Endothelial cell of umbilical vein (primary cell): ENCODE measurements at regions of chr17 and their contacts with region 1.

Region 1: GRCh38 chr17:76623271-76624146 is 20.0 kb downstream of the ST6GALNAC1 start:
- DNase-seq: peak; percentile 79
- H3K4me3 ChIP-seq: peak overlapping the region in 2 of 3 experiments; percentile 10 to 20
- H3K27ac ChIP-seq: peak overlapping the region; percentile 79
- H3K4me1 ChIP-seq: peaks cover 10% of the 10 kb centered on the region
- H3K27me3 ChIP-seq: peaks cover 0 to 2% of the 10 kb centered on the region in 2 experiments
- CTCF ChIP-seq: peak; percentile 96 to 97
- POLR2A ChIP-seq: no peak

Region 2: GRCh38 chr17:76523084-76524037 is 100.1 kb before region 1 on chr17:
- CTCF ChIA-PET with region 1: interaction called, 112 read pairs
- POLR2A ChIA-PET with region 1: no interaction called
- dilution Hi-C with region 1: no loop called
- intact Hi-C with region 1: loop called (anchors 1 kb)
- DNase-seq: peak; percentile 60
- H3K4me3 ChIP-seq: no peak overlapping the region
- H3K27ac ChIP-seq: no peak overlapping the region
- H3K4me1 ChIP-seq: peaks cover 10% of the 10 kb centered on the region
- H3K27me3 ChIP-seq: no peaks in the 10 kb centered on the region
- CTCF ChIP-seq: peak; percentile 99 to 100
- POLR2A ChIP-seq: no peak

Region 3: GRCh38 chr17:76557368-76558197 is 65.9 kb before region 1 on chr17:
- CTCF ChIA-PET with region 1: interaction called, 121 read pairs
- POLR2A ChIA-PET with region 1: no interaction called
- dilution Hi-C with region 1: no loop called
- intact Hi-C with region 1: loop called (anchors 1 kb)
- DNase-seq: peak; percentile 98
- H3K4me3 ChIP-seq: peak overlapping the region; percentile 66 to 94 (median 78)
- H3K27ac ChIP-seq: peak overlapping the region; percentile 68
- H3K4me1 ChIP-seq: peaks cover 40% of the 10 kb centered on the region
- H3K27me3 ChIP-seq: no peaks in the 10 kb centered on the region
- CTCF ChIP-seq: peak; percentile 80 to 88
- POLR2A ChIP-seq: peak; percentile 97

Region 4: DNA sequence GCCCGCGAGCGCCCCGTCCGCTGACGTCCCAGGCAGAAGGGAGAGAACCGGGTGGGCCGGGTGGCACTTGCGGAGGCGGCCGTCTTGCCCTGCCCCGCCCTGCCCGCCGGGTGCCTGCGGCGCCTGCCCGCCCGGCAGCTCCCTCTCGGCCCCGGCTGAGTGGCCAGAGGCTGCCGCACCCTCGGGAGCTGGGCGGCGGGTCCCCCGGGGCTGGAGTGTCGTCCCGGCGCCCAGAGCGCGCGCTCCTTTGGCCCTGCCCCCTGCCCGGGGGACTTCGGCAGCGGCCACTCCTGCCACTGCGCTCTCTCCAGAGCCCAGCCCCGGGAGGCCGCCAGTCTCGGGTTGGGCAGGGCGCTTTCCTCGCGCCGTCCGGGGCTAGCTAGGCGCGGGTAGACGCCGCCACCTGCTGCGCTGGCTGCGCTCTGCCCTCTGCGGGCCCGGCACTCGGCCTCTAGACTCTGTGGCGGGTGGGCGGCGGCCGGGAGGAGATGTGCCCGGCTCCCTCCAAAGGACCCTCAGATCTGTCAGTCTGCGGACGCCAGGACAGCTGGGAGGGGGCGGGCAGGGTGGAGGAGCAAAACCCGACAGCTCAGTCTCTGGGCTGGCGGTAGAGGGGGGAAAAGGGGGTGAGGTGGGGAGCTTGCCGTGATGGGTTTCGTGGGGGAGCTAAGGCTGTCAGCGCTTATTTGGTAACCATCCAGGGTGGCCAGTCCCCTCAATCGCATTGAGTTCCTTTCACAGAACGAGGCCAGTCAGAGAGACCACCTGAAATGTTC is 37.5 kb before region 1 on chr17 and contains the start of gene ST6GALNAC2:
- CTCF ChIA-PET with region 1: interaction called, 32 read pairs
- POLR2A ChIA-PET with region 1: no interaction called
- dilution Hi-C with region 1: no loop called
- intact Hi-C with region 1: loop called (anchors 5 kb)
- DNase-seq: peak; percentile 50
- H3K4me3 ChIP-seq: peak within 1 kb of the TSS; percentile 17 to 37 (median 35)
- H3K27ac ChIP-seq: no peak within 1 kb of the TSS
- H3K4me1 ChIP-seq: peaks cover 5% of the 10 kb centered on the region
- H3K27me3 ChIP-seq: peaks cover 16 to 18% of the 10 kb centered on the region in 2 experiments
- CTCF ChIP-seq: peak; percentile 21 to 55
- POLR2A ChIP-seq: no peak
- total RNA-seq, gene ST6GALNAC2: 0.69 and 1.7 TPM in 2 replicates

Region 5: DNA sequence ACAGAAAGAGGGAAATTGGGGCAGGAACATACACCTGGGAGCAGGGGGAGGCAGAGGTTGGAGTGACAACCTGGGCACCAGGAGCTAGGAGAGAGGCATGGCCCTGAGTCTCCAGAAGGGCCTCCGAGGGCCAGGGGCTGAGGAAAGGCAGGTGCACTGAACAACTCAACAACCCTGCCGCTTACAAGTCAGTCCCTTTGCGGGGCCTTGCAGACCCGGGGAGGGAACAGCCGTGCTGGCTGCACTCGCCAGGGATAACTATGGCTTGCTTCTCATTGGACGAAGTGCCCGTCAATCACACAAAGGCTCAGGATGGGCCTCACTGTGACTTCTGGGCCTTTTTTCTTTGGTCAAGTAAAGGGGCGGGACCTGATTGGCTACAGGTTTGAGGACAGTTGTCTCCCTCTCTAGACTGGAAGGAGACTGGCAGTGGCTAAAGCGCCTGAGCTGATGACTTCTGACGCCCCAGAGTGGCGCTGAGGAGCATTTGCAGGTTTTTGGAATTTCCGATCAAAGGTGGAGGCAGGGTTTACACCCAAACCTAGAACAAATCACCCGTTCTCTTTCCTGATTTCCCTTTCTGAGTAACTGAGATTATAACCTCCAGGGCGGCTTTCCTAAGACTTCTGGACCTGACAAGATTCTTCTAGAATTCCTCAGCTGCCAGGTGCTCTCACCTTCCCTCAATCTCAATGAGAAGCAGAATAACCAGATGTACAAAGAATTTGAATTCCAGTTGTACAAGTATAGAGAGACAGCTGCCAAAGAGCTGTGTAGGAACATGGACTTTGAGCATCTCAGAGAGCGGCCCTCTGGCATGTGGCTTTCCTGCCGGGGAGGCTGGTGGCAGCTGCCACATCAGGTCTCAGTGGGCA is 10.3 kb before region 1 on chr17:
- CTCF ChIA-PET with region 1: interaction called, 11 read pairs
- POLR2A ChIA-PET with region 1: no interaction called
- dilution Hi-C with region 1: no loop called
- intact Hi-C with region 1: no loop called
- DNase-seq: no peak
- H3K4me3 ChIP-seq: no peak overlapping the region
- H3K27ac ChIP-seq: no peak overlapping the region
- H3K4me1 ChIP-seq: no peaks in the 10 kb centered on the region
- H3K27me3 ChIP-seq: no peaks in the 10 kb centered on the region
- CTCF ChIP-seq: no peak
- POLR2A ChIP-seq: no peak

Region 6: DNA sequence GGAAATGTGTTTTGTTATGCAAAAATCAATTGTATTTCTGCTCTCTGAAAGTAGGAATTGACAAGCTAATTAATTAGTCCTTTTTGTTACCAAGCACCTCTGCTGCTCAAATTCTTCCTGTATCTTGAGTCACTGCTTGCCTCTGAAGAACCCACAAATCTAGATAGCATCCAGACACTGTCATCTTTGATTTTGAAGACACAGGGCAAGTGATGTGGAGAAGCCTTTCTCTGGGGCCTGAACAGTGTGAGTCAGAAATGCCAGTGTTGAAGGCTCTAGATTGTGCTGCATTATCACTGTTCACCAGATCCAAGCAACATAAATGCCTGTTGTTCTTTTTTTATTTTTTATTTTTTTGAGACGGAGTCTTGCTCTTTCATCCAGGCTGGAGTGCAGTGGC is 30.9 kb after region 1 on chr17:
- CTCF ChIA-PET with region 1: interaction called, 10 read pairs
- POLR2A ChIA-PET with region 1: no interaction called
- dilution Hi-C with region 1: no loop called
- intact Hi-C with region 1: no loop called
- DNase-seq: no peak
- H3K4me3 ChIP-seq: no peak overlapping the region
- H3K27ac ChIP-seq: no peak overlapping the region
- H3K4me1 ChIP-seq: no peaks in the 10 kb centered on the region
- H3K27me3 ChIP-seq: peaks cover 0 to 2% of the 10 kb centered on the region in 2 experiments
- CTCF ChIP-seq: no peak
- POLR2A ChIP-seq: no peak

Region 7: DNA sequence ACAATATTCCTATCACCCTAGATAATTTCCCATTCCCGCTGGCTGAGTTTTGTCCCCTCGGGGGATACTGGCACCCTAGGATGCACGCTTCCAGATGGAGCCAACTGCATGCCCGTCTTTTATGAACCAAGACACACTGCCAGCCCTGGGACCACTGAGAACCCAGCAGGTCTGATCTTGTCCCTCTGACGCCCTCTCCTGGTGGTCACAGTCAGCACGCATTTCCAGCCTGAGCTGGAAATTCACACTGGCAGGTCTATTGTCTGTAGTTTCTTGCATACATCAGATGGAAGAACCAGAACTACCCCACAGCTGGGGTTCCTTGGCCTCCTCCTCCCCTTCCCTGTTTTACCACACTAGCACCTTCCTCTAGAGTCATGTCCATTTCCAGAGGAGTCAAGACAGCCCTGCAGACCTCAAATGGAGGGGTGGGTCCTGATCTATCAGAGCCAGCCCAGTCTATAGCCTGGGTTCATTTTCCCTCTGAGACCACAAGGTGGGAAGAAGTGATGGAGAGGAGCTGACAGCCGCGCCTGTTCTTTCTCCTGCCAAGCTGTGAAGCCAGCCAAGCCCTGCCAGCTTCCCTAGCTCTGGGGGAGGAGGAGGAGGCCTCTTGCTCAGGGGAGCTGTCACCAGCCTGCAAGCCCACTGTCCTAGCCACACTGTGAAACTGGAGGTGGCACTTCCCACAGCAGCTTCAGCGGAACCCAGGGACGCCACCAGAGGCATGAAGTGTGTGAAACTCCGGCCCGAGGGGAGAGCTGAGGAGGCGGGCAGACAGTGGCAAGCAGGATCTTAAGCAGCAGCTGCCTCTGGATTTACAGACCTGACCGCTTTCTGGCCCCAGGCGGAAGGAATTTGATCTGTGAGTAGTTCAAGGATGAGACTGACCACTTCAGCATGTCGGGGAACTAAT is 58.0 kb after region 1 on chr17:
- CTCF ChIA-PET with region 1: interaction called, 27 read pairs
- POLR2A ChIA-PET with region 1: no interaction called
- dilution Hi-C with region 1: no loop called
- intact Hi-C with region 1: no loop called
- DNase-seq: peak; percentile 72
- H3K4me3 ChIP-seq: no peak overlapping the region
- H3K27ac ChIP-seq: no peak overlapping the region
- H3K4me1 ChIP-seq: no peaks in the 10 kb centered on the region
- H3K27me3 ChIP-seq: no peaks in the 10 kb centered on the region
- CTCF ChIP-seq: peak; percentile 82 to 84
- POLR2A ChIP-seq: no peak

Region 8: DNA sequence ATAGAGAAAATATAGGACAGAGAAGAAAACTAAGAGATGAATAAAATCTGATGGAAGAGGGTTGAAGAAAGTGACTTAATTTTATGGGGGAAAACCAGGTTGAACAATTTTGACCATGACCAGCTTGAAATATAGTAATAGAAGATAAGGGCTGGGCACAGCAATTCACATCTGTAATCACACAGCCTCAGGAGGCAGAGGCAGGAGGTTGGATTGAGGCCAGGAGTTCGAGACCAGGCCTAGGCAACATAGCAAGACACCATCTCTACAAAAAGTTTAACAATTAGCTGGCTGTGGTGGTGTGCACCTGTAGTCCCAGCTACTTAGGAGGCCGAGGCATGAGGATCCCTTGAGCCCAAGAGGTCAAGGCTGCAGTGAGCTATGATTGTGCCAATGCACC is 78.6 kb after region 1 on chr17:
- CTCF ChIA-PET with region 1: no interaction called
- POLR2A ChIA-PET with region 1: no interaction called
- dilution Hi-C with region 1: no loop called
- intact Hi-C with region 1: no loop called
- DNase-seq: no peak
- H3K4me3 ChIP-seq: no peak overlapping the region
- H3K27ac ChIP-seq: no peak overlapping the region
- H3K4me1 ChIP-seq: peaks cover 24% of the 10 kb centered on the region
- H3K27me3 ChIP-seq: no peaks in the 10 kb centered on the region
- CTCF ChIP-seq: no peak
- POLR2A ChIP-seq: no peak